ENCODE measurements at regions of chr5 and their contacts with region 1.

Region 1: DNA sequence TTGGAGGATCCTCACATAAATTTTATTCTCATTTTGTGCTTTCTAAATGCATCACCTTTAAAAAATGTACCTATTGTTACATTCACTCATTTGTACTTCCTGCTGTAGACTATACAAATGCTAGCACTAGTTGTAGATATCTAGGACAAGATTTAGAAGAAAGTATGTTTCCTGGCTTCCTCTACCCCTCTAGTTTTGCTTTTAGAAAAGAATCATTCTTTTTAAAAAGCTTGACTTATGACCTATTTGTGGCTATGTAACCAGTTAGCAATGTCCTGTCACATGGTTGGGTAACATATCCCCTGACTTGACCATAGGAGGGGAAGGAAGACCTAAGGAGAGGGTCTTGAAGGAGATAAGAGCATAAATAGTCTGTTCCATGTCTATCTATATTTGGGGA is 13.3 kb downstream of the CAMK4 start:
- DNase-seq: peak in 1 of 9 experiments; percentile 19
- ATAC-seq: peak; percentile 10
- H3K4me3 ChIP-seq: peak overlapping the region in 1 of 2 experiments; percentile 9
- H3K4me3 Mint-ChIP-seq: peak overlapping the region; percentile 79
- H3K27ac ChIP-seq: peak overlapping the region; percentile 36 to 68
- H3K27ac Mint-ChIP-seq: peak overlapping the region; percentile 95
- H3K4me1 ChIP-seq: peaks cover 97% of the 10 kb centered on the region
- H3K4me1 Mint-ChIP-seq: peaks cover 91% of the 10 kb centered on the region
- H3K27me3 ChIP-seq: no peaks in the 10 kb centered on the region
- H3K27me3 Mint-ChIP-seq: no peaks in the 10 kb centered on the region
- CTCF ChIP-seq: no peak

Region 2: DNA sequence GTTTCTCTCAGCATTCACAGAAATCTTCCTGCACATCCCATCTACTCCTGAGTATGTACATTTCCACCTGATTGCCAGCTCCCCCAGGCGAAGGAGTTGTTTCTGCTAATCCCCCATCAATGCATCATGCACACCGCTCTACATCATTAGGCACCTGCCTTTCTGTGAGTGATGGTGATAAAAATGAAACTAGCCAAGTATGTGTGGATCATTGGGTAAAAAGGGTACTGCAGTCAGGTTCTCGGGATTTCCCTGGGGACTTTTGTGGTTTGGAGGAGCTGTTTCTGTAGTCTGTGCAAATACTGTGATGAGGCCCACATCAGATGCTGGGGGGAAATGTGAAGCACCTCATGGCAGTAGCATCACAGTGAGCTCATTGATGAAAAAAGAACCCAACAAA is 17.1 kb after region 1 on chr5:
- CTCF ChIA-PET with region 1: interaction called, 3 read pairs
- POLR2A ChIA-PET with region 1: interaction called, 4 read pairs
- intact Hi-C with region 1: loop called (anchors 2 kb)
- DNase-seq: peak in 6 of 9 experiments; percentile 19 to 93 (median 69)
- ATAC-seq: peak; percentile 86
- H3K4me3 ChIP-seq: no peak overlapping the region
- H3K4me3 Mint-ChIP-seq: peak overlapping the region; percentile 60
- H3K27ac ChIP-seq: peak overlapping the region; percentile 14 to 62
- H3K27ac Mint-ChIP-seq: peak overlapping the region; percentile 90
- H3K4me1 ChIP-seq: peaks cover 68% of the 10 kb centered on the region
- H3K4me1 Mint-ChIP-seq: peaks cover 79% of the 10 kb centered on the region
- H3K27me3 ChIP-seq: no peaks in the 10 kb centered on the region
- H3K27me3 Mint-ChIP-seq: no peaks in the 10 kb centered on the region
- CTCF ChIP-seq: no peak

Region 3: GRCh38 chr5:111271885-111272284 is 34.4 kb after region 1 on chr5:
- CTCF ChIA-PET with region 1: no interaction called
- POLR2A ChIA-PET with region 1: interaction called, 3 read pairs
- intact Hi-C with region 1: loop called in 1 of 2 experiments (anchors 5 kb)
- DNase-seq: no peak
- ATAC-seq: no peak
- H3K4me3 ChIP-seq: no peak overlapping the region
- H3K4me3 Mint-ChIP-seq: no peak overlapping the region
- H3K27ac ChIP-seq: no peak overlapping the region
- H3K27ac Mint-ChIP-seq: peak overlapping the region; percentile 58
- H3K4me1 ChIP-seq: peaks cover 12% of the 10 kb centered on the region
- H3K4me1 Mint-ChIP-seq: peaks cover 78% of the 10 kb centered on the region
- H3K27me3 ChIP-seq: no peaks in the 10 kb centered on the region
- H3K27me3 Mint-ChIP-seq: no peaks in the 10 kb centered on the region
- CTCF ChIP-seq: no peak

Measured in CD8-positive, alpha-beta T cell (primary cell).